PC-3 (cell line): ENCODE measurements at regions of chr10 and their contacts with region 1.

Region 1: DNA sequence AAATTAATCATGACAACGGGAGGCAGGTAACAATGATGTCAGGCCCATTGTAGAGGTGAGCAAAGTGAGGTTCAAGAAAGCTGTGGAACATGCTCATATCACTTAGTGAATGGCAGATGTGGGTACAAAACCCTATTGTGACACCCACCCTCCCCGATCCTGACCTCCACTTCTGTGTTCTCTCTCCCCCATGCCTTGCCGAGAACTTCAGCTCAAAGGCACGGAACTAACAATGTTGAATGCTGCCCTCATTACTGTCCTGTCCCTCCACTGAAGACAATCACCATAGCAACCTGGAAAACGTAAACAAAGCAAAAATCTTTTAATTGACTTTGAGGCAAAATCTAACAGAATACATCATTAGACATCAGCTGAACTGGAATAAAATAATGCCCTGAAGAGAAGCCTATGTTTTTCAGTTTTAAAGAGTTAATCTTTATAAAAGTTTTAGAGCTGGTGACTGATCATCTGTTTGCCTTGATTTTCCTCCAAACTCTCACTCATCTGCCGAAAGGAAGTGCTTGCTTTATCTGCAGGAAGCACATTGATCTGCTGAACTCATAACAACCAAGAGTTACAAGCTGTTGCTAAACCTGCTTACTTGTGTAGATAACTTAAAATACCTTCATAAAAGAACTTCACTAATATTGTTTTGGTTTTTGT is 133.6 kb downstream of the CUBN start:
- DNase-seq: peak; percentile 53
- ATAC-seq: peak; percentile 81
- H3K4me3 ChIP-seq: peak overlapping the region; percentile 42
- H3K27ac ChIP-seq: peak overlapping the region; percentile 95
- H3K4me1 ChIP-seq: peaks cover 19% of the 10 kb centered on the region
- H3K27me3 ChIP-seq: no peaks in the 10 kb centered on the region
- CTCF ChIP-seq: no peak

Region 2: DNA sequence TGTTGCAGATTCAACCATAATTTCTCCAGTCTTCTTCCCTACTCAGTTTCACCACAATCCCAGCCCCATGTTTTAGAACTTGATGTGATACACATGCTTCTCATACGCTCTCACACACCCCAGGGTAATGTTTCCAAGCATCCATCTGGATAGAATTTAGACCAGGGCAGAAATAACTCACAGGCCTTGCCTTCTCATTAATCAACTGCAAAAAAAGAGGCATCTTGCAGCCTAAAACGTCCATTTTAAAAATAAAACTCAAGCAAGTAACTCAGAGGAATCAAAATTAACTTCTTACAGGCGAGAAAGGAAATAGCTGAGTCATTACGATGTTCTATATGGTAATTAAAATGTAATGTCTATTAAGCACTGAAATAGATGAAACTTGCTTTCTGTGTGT is 51.6 kb before region 1 on chr10:
- CTCF ChIA-PET with region 1: no interaction called
- POLR2A ChIA-PET with region 1: no interaction called
- intact Hi-C with region 1: loop called (anchors 2 kb)
- DNase-seq: no peak
- ATAC-seq: no peak
- H3K4me3 ChIP-seq: no peak overlapping the region
- H3K27ac ChIP-seq: no peak overlapping the region
- H3K4me1 ChIP-seq: no peaks in the 10 kb centered on the region
- H3K27me3 ChIP-seq: no peaks in the 10 kb centered on the region
- CTCF ChIP-seq: no peak

Region 3: DNA sequence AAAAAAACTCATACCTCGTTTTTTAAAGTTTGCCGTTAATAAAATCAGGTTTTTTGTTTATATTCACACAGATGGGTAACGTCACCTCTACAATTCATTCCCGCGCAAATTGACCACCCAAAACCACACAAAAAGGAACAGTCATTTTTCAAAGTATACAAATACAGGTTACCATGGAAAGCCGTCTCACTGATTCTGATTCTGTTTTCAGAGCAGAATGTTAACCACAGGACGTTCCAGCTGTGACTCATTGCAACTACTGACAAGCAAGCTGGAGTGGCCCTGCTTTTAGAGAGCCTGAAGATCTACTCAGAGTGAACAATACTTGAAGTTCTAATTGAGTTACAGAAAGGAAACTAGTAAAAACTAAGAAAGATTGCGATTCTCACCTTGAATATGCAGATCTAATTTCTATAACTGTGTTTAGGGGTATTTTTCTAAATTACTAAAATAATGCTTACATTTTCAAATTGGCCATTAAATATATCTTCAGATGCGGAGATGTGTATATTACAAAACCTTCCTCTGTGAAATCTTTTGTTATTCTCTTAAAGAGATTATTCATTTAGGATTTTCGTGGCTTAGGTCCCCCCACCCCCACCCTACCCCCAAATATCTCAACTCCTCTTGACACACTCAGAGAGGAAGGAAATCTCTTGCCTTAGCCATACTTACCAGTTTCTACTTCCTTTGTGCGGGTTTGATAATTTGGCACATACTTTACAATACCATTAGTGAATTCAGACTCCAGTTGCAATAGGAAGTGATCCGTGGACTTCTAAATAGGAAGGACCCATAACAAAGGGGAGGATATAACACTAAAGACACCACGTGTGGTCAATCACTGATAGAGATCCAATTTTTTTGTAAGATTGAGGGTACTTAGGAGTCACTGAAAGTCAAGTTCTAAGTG is 27.6 kb after region 1 on chr10:
- CTCF ChIA-PET with region 1: no interaction called
- POLR2A ChIA-PET with region 1: no interaction called
- intact Hi-C with region 1: loop called (anchors 2 kb)
- DNase-seq: peak; percentile 88
- ATAC-seq: peak; percentile 85
- H3K4me3 ChIP-seq: no peak overlapping the region
- H3K27ac ChIP-seq: peak overlapping the region; percentile 92
- H3K4me1 ChIP-seq: peaks cover 41% of the 10 kb centered on the region
- H3K27me3 ChIP-seq: no peaks in the 10 kb centered on the region
- CTCF ChIP-seq: no peak

Region 4: GRCh38 chr10:17138460-17139042 is 142.6 kb after region 1 on chr10:
- CTCF ChIA-PET with region 1: no interaction called
- POLR2A ChIA-PET with region 1: no interaction called
- intact Hi-C with region 1: no loop called
- DNase-seq: no peak
- ATAC-seq: no peak
- H3K4me3 ChIP-seq: no peak overlapping the region
- H3K27ac ChIP-seq: no peak overlapping the region
- H3K4me1 ChIP-seq: no peaks in the 10 kb centered on the region; the same call in 1 of the 2 replicates
- H3K27me3 ChIP-seq: no peaks in the 10 kb centered on the region
- CTCF ChIP-seq: no peak